ENCODE measurements at regions of chr12 and their contacts with region 1.

Region 1: GRCh38 chr12:116015525-116015924 is 262.0 kb downstream of the MED13L start:
- DNase-seq: no peak
- H3K4me3 ChIP-seq: no peak overlapping the region
- H3K27ac ChIP-seq: no peak overlapping the region
- H3K4me1 ChIP-seq: peaks cover 4 to 23% (median 13%) of the 10 kb centered on the region in 4 donors
- H3K27me3 ChIP-seq: no peaks in the 10 kb centered on the region
- CTCF ChIP-seq: peak; percentile 55 to 69 (median 59)
- EP300 ChIP-seq: no peak
- POLR2A ChIP-seq: no peak

Region 2: GRCh38 chr12:115817389-115817788 is 198.1 kb before region 1 on chr12:
- intact Hi-C with region 1: no loop called
- DNase-seq: no peak
- H3K4me3 ChIP-seq: no peak overlapping the region
- H3K27ac ChIP-seq: no peak overlapping the region
- H3K4me1 ChIP-seq: no peaks in the 10 kb centered on the region
- H3K27me3 ChIP-seq: peaks cover 0 to 51% (median 0%) of the 10 kb centered on the region in 4 donors
- CTCF ChIP-seq: no peak
- EP300 ChIP-seq: no peak
- POLR2A ChIP-seq: no peak

Region 3: DNA sequence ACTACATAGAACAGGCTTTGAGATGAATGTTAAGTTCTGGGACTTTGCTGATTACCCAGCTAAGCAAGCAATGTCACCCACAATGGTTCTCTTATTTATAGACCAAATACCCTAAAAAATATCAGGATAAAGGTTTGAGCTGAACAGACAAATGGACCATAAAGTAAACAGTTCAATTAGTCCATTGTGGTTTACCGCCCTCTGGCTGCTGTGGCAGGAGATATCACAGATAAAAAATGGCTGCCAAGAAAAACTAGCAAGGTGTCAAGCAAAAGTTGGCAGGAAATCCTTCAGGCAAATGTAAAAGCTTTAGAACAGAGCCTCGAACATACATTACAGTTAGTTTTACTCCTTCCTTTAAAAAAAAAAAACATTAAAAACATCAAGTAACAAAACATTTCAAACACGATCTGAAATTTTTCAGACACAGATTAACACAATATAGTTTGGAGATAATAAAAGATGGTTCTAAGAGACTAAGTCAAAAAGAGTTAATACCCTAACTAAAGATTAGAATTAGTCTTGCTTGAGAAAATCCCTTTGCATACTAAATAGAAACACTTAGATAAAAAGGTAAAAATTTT is 220.7 kb after region 1 on chr12:
- intact Hi-C with region 1: loop called (anchors 2 kb)
- DNase-seq: no peak
- H3K4me3 ChIP-seq: no peak overlapping the region
- H3K27ac ChIP-seq: peak overlapping the region in 2 of 4 donors; percentile 26 to 34
- H3K4me1 ChIP-seq: peaks cover 32 to 82% (median 82%) of the 10 kb centered on the region in 4 donors
- H3K27me3 ChIP-seq: no peaks in the 10 kb centered on the region
- CTCF ChIP-seq: peak; percentile 76 to 85 (median 81)
- EP300 ChIP-seq: no peak
- POLR2A ChIP-seq: no peak